Transverse colon (tissue), 4 donors: ENCODE measurements at regions of chr1 and their contacts with region 1.

Region 1: GRCh38 chr1:38228718-38229117 is 182.1 kb upstream of the POU3F1 start:
- DNase-seq: no peak
- H3K4me3 ChIP-seq: no peak overlapping the region
- H3K27ac ChIP-seq: no peak overlapping the region
- H3K4me1 ChIP-seq: no peaks in the 10 kb centered on the region
- H3K27me3 ChIP-seq: no peaks in the 10 kb centered on the region
- CTCF ChIP-seq: no peak
- EP300 ChIP-seq: no peak
- POLR2A ChIP-seq: no peak

Region 2: DNA sequence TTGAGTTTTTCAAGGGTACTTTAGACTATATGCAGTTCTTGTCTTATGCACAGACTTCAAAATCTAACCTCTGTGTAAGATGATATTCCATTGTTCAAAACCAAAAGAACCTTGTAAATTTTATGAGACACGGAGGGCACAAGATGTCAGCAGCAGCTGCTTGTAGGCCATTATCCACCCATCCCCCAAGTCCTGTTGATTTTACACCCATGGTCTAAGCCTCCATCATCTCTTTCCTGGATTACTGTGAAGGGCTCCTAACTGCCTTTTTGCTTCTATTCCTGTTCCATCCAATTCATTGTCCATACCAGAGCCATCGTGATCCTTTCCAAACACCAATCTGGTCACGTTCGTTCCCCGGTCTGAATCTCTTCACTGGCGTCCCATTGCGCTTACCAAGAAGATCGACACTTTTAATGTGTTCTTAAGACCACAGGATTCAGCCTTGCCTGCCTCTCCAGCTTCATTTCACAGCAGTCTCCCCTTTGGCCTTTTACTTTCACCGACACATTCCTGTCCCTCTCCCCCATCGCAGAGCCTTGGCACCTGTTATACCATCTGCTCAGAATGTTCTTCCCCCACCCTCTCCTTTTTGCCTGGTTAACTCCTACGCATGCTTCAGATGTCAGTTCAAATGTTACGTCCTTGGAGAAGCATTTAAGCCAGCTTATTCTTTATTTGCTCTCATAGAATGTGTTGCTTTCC is 74.8 kb before region 1 on chr1:
- in situ Hi-C with region 1: no loop called
- intact Hi-C with region 1: loop called (anchors 2 kb)
- DNase-seq: no peak
- H3K4me3 ChIP-seq: no peak overlapping the region
- H3K27ac ChIP-seq: no peak overlapping the region
- H3K4me1 ChIP-seq: no peaks in the 10 kb centered on the region
- H3K27me3 ChIP-seq: peaks cover 17% of the 10 kb centered on the region
- CTCF ChIP-seq: no peak
- EP300 ChIP-seq: no peak
- POLR2A ChIP-seq: no peak